Naive thymus-derived CD4-positive, alpha-beta T cell (primary cell): ENCODE measurements at regions of chr17 and their contacts with region 1.

Region 1: DNA sequence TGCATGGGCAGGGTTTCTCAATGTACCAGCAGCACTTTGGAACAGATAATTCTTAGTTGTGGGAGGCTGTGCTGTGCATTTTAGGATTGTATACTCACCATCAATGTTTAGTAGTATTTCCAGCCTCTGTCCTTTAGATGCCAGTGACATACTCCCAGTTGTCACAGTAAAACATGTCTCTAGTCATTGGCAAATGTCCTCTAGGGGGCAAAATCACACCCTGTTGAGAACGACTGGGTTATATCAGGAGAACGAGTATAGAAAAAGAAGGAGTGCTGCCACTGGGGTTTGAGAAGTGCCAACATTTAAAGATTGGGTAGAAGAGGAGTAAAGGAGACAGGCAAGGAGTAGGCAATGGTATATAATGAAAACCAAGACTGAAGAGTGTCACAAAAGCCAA is 37.9 kb upstream of the SMIM36 start:
- DNase-seq: peak in 2 of 9 donors; percentile 3 to 11
- ATAC-seq: no peak
- H3K4me3 ChIP-seq: no peak overlapping the region
- H3K4me3 Mint-ChIP-seq: no peak overlapping the region
- H3K27ac ChIP-seq: no peak overlapping the region
- H3K27ac Mint-ChIP-seq: peak overlapping the region in 1 of 9 donors; percentile 6
- H3K4me1 ChIP-seq: no peaks in the 10 kb centered on the region
- H3K4me1 Mint-ChIP-seq: peaks cover 0 to 7% (median 0%) of the 10 kb centered on the region in 7 donors
- H3K27me3 ChIP-seq: no peaks in the 10 kb centered on the region
- H3K27me3 Mint-ChIP-seq: peaks cover 11 to 25% (median 13%) of the 10 kb centered on the region in 5 donors

Region 2: GRCh38 chr17:55377671-55378275 is 171.4 kb before region 1 on chr17:
- CTCF ChIA-PET with region 1: no interaction called
- POLR2A ChIA-PET with region 1: no interaction called
- intact Hi-C with region 1: no loop called
- DNase-seq: no peak
- ATAC-seq: no peak
- H3K4me3 ChIP-seq: no peak overlapping the region
- H3K4me3 Mint-ChIP-seq: no peak overlapping the region
- H3K27ac ChIP-seq: no peak overlapping the region
- H3K27ac Mint-ChIP-seq: no peak overlapping the region
- H3K4me1 ChIP-seq: no peaks in the 10 kb centered on the region
- H3K4me1 Mint-ChIP-seq: no peaks in the 10 kb centered on the region
- H3K27me3 ChIP-seq: no peaks in the 10 kb centered on the region
- H3K27me3 Mint-ChIP-seq: peaks cover 0 to 23% (median 10%) of the 10 kb centered on the region in 5 donors

Region 3: DNA sequence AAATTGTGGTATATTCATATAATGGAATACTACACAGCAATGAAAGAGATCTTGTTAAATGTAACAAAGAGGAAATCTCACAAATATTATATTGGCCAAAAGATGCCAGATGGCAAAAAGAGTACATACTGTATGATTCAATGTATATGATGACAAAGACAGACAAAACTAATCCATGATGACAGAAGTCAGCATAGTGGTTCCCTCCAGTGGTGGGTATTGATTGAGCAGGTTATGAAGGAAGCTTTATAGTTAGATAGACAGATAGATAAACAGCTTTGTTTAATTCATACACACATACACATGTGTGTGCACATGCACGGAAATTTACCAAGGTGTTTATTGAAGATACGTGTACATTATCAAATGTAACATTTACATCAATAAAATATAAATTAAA is 36.5 kb after region 1 on chr17:
- CTCF ChIA-PET with region 1: interaction called, 3 read pairs
- POLR2A ChIA-PET with region 1: no interaction called
- intact Hi-C with region 1: loop called in 1 of 2 experiments (anchors 1 kb)
- DNase-seq: no peak
- ATAC-seq: no peak
- H3K4me3 ChIP-seq: no peak overlapping the region
- H3K4me3 Mint-ChIP-seq: no peak overlapping the region
- H3K27ac ChIP-seq: no peak overlapping the region
- H3K27ac Mint-ChIP-seq: no peak overlapping the region
- H3K4me1 ChIP-seq: no peaks in the 10 kb centered on the region
- H3K4me1 Mint-ChIP-seq: peaks cover 0 to 9% (median 2%) of the 10 kb centered on the region in 7 donors
- H3K27me3 ChIP-seq: no peaks in the 10 kb centered on the region
- H3K27me3 Mint-ChIP-seq: peaks cover 0 to 13% (median 0%) of the 10 kb centered on the region in 5 donors